ENCODE measurements at regions of chr5 and their contacts with region 1.

Region 1: GRCh38 chr5:143101121-143101520 is 302.4 kb downstream of the NR3C1 start:
- DNase-seq: peak; percentile 76
- H3K4me3 Mint-ChIP-seq: peak overlapping the region; percentile 58
- H3K27ac Mint-ChIP-seq: peak overlapping the region; percentile 92
- H3K4me1 Mint-ChIP-seq: peaks cover 46% of the 10 kb centered on the region
- H3K27me3 Mint-ChIP-seq: no peaks in the 10 kb centered on the region

Region 2: GRCh38 chr5:141908796-141909195 is 1192.3 kb before region 1 on chr5:
- intact Hi-C with region 1: no loop called
- DNase-seq: no peak
- H3K4me3 Mint-ChIP-seq: no peak overlapping the region
- H3K27ac Mint-ChIP-seq: no peak overlapping the region
- H3K4me1 Mint-ChIP-seq: peaks cover 6% of the 10 kb centered on the region
- H3K27me3 Mint-ChIP-seq: peaks cover 31% of the 10 kb centered on the region

Region 3: GRCh38 chr5:141940695-141941271 is 1160.3 kb before region 1 on chr5:
- intact Hi-C with region 1: no loop called
- DNase-seq: no peak
- H3K4me3 Mint-ChIP-seq: no peak overlapping the region
- H3K27ac Mint-ChIP-seq: peak overlapping the region; percentile 68
- H3K4me1 Mint-ChIP-seq: peaks cover 11% of the 10 kb centered on the region
- H3K27me3 Mint-ChIP-seq: no peaks in the 10 kb centered on the region

Region 4: GRCh38 chr5:142955628-142956027 is 145.5 kb before region 1 on chr5:
- intact Hi-C with region 1: no loop called
- DNase-seq: no peak
- H3K4me3 Mint-ChIP-seq: no peak overlapping the region
- H3K27ac Mint-ChIP-seq: no peak overlapping the region
- H3K4me1 Mint-ChIP-seq: peaks cover 17% of the 10 kb centered on the region
- H3K27me3 Mint-ChIP-seq: no peaks in the 10 kb centered on the region

Region 5: DNA sequence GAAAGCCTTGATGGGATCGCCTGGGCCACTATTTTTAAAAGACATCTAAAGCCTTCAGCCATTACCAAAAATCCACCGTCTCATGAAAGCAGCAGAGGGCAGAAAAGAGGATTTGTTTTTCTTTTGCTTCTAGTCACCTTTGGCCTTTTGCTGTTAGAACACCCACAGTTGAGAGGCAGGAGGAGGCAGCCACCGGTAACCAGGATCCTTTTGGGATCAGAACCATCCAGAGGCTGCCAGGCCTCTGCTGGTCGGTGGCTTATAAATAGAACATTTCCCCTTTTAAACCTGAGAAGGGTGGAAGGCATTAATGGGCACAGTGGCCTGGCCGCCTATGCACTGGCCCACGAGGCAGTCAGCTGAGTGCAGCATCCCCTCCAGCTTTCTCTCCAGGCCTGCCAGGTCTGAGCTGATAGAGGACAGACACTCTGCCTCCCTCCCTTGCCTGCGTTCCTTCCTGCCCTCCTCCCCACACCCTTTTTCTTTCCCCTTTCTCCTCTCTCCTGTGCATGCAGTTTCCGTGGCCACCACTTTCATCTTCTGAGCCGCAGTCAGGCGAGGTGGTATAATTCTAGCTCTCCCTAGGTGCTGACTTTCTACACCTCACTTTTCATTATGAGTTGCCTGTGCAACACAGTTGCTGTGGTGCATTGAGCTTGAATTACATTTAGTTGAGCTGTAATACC is 77.6 kb before region 1 on chr5:
- intact Hi-C with region 1: loop called (anchors 5 kb)
- DNase-seq: peak; percentile 84
- H3K4me3 Mint-ChIP-seq: peak overlapping the region; percentile 28
- H3K27ac Mint-ChIP-seq: peak overlapping the region; percentile 56
- H3K4me1 Mint-ChIP-seq: peaks cover 46% of the 10 kb centered on the region
- H3K27me3 Mint-ChIP-seq: no peaks in the 10 kb centered on the region

Region 6: DNA sequence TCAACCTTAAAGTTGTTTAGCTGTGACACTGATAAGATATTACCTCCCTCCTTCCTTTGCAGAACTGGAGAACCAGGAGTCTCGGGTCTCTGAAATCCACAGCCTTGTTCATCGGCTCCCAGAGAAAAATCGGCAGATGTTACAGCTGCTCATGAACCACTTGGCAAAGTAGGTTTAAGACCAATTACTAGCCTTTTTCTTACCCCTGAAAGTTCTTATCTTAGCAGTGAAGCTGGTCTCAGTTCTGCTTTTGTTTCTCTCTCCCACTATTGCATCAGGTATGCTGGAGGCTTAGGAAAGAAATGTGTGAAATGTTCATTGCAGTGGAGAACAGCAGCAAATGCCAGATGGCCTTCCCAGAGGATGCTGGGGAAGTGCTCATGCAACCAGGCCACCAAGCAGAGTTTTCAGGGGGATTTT is 43.5 kb before region 1 on chr5:
- intact Hi-C with region 1: loop called (anchors 1 kb)
- DNase-seq: no peak
- H3K4me3 Mint-ChIP-seq: no peak overlapping the region
- H3K27ac Mint-ChIP-seq: peak overlapping the region; percentile 95
- H3K4me1 Mint-ChIP-seq: peaks cover 62% of the 10 kb centered on the region
- H3K27me3 Mint-ChIP-seq: no peaks in the 10 kb centered on the region

Region 7: DNA sequence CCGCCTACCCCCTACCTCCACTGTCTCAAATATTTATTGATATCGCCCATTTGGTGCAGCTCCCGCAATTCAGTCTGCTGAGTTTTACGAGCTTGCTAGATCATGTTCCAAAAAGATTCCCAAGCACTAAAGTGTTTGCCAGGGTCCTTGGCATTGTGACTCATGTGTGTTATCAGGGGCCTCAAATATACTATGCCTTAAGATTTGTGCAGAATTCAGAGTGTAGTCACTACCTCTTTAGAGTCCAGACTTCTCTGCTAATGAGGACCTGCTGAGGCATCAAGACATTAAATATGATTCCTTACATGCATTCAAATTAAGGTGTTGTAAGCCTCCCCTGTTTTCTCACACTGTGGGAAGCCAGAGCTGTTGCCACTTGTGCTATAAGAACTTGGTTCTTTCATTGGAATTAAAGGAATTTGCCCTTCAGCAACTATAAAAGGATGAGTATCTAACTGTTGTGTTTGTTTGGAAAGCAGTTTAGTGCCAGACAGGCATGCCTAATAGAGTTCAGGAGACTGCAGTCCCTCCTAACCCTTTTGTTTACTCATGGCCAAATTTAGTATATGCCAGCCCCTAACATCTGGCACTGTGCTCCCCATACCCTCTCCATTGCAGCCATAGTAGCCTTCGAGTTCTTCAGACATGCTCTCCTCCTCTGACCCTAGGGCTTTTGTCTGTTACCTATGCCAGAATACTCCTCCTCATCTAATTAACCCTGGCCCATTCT is 14.0 kb before region 1 on chr5:
- intact Hi-C with region 1: no loop called
- DNase-seq: no peak
- H3K4me3 Mint-ChIP-seq: no peak overlapping the region
- H3K27ac Mint-ChIP-seq: no peak overlapping the region
- H3K4me1 Mint-ChIP-seq: peaks cover 9% of the 10 kb centered on the region
- H3K27me3 Mint-ChIP-seq: no peaks in the 10 kb centered on the region

Region 8: GRCh38 chr5:143119291-143119769 is 18.2 kb after region 1 on chr5:
- intact Hi-C with region 1: loop called (anchors 1 kb)
- DNase-seq: no peak
- H3K4me3 Mint-ChIP-seq: no peak overlapping the region
- H3K27ac Mint-ChIP-seq: peak overlapping the region; percentile 68
- H3K4me1 Mint-ChIP-seq: peaks cover 32% of the 10 kb centered on the region
- H3K27me3 Mint-ChIP-seq: no peaks in the 10 kb centered on the region

Region 9: DNA sequence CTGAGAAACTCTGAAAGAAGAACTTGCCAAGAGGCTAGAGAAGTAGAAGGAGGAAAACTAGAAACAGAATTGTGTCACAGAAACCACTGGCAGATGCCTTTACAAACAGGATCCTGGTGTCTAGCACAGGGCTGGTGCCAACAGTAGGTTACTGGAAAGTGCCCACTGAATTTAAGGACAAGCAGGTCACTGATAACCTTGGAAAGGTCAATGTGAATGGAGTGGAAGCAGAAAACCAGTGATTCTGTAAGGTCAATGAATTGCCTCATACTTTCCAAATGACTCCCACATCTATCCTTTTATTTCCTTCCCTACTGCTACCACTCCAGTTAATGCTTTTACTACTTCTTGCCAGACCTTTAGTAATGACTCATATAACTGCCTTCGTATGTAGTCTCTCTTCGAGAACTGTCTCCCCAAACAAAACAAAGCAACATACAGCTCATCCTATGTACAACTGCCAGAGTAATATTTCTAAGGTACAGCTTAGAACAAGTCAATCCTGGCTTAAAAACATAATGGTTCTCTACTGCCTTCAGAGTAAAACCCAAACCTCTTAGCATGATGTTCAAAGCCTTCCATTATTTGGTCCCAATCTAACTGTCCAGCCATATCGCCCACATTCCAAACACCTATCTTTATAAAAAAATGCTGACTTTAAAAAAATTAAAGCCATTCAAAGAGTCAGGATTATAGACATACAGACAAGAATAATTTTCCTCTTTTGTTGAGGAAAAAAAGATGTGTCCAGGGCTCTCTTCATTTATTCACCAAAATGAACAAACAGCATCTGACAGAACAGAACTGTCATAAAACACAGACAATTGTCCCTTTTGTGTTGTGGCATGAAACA is 249.9 kb after region 1 on chr5:
- intact Hi-C with region 1: loop called (anchors 2 kb)
- DNase-seq: no peak
- H3K4me3 Mint-ChIP-seq: no peak overlapping the region
- H3K27ac Mint-ChIP-seq: no peak overlapping the region
- H3K4me1 Mint-ChIP-seq: peaks cover 42% of the 10 kb centered on the region
- H3K27me3 Mint-ChIP-seq: no peaks in the 10 kb centered on the region

Measured in activated CD4-positive, alpha-beta T cell treated with anti-CD3 and anti-CD28 coated beads, Interleukin-2, amount 10 ng/mL, durations not matched to agents 24 days and 14 days (primary cell).